Sigmoid colon (tissue), 7 donors: ENCODE measurements at regions of chr15 and their contacts with region 1.

Region 1: DNA sequence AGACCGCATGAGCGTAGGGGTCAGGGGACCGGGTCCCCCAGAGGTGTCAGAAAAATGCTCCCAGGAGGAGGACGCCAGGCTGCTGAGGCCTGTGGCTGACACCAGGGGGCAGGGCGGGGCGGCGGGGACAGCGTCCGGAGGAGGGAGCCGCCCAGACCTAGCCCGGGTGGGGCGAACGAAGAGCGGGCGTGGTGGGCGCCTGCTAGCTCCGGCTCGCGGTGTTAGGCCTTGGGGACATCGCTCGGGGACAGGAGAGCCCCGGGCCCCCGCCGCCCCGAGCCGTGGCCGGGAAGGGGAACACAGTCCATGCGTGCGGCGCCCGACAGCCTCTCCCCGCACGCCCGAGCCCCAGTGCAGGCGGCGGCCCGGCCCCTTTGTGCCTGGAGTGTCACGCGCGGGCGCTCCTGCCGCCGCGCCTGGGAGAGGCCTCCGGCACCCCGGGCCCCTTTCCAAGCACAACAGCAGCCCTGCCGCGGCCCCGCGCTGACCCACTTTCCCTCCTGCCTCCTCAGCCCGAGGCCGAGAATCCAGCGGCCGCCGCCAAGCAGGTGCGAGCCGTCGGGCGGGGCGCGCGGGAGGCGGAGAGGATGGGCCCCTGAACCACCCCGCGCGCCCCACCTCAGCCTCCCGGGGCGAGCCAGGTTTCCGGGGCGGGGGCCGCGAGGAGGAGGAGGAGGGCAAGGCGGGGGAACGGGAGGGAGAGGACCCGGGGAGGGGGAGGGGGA is 111.0 kb upstream of the KLF13 start:
- DNase-seq: peak; percentile 92
- H3K4me3 ChIP-seq: peak overlapping the region; percentile 47 to 70 (median 64)
- H3K27ac ChIP-seq: peak overlapping the region; percentile 84 to 98 (median 93)
- H3K4me1 ChIP-seq: peaks cover 0 to 28% (median 22%) of the 10 kb centered on the region in 4 donors
- H3K27me3 ChIP-seq: no peaks in the 10 kb centered on the region
- CTCF ChIP-seq: peak; percentile 85 to 93 (median 92)
- EP300 ChIP-seq: no peak
- POLR2A ChIP-seq: no peak

Region 2: GRCh38 chr15:31236184-31237042 is 20.8 kb after region 1 on chr15:
- intact Hi-C with region 1: loop called (anchors 1 kb)
- DNase-seq: peak; percentile 96
- H3K4me3 ChIP-seq: peak overlapping the region in 1 of 4 donors; percentile 20
- H3K27ac ChIP-seq: peak overlapping the region; percentile 87 to 90 (median 88)
- H3K4me1 ChIP-seq: peaks cover 0 to 37% (median 26%) of the 10 kb centered on the region in 4 donors
- H3K27me3 ChIP-seq: no peaks in the 10 kb centered on the region
- CTCF ChIP-seq: no peak
- EP300 ChIP-seq: peak in 3 of 4 donors; percentile 44 to 86 (median 50)
- POLR2A ChIP-seq: no peak

Region 3: GRCh38 chr15:31365655-31366127 is 150.0 kb after region 1 on chr15:
- intact Hi-C with region 1: loop called (anchors 1 kb)
- DNase-seq: peak; percentile 99
- H3K4me3 ChIP-seq: peak overlapping the region; percentile 29 to 44 (median 42)
- H3K27ac ChIP-seq: peak overlapping the region; percentile 81 to 92 (median 84)
- H3K4me1 ChIP-seq: peaks cover 0 to 75% (median 61%) of the 10 kb centered on the region in 4 donors
- H3K27me3 ChIP-seq: no peaks in the 10 kb centered on the region
- CTCF ChIP-seq: peak in 2 of 4 experiments; percentile 34 to 42
- EP300 ChIP-seq: peak; percentile 99 to 100 (median 100)
- POLR2A ChIP-seq: no peak

Region 4: GRCh38 chr15:31440754-31441311 is 225.2 kb after region 1 on chr15:
- intact Hi-C with region 1: loop called (anchors 2 kb)
- DNase-seq: peak; percentile 82
- H3K4me3 ChIP-seq: peak overlapping the region; percentile 47 to 72 (median 64)
- H3K27ac ChIP-seq: peak overlapping the region; percentile 67 to 78 (median 71)
- H3K4me1 ChIP-seq: peaks cover 0 to 22% (median 8%) of the 10 kb centered on the region in 4 donors
- H3K27me3 ChIP-seq: no peaks in the 10 kb centered on the region
- CTCF ChIP-seq: no peak
- EP300 ChIP-seq: no peak
- POLR2A ChIP-seq: no peak